Ascending aorta (tissue), 2 donors: ENCODE measurements at regions of chr3 and their contacts with region 1.

Region 1: GRCh38 chr3:74630602-74631001 is 16.1 kb upstream of the CNTN3 start:
- DNase-seq: no peak
- H3K4me3 ChIP-seq: no peak overlapping the region
- H3K27ac ChIP-seq: no peak overlapping the region
- H3K4me1 ChIP-seq: no peaks in the 10 kb centered on the region
- H3K27me3 ChIP-seq: no peaks in the 10 kb centered on the region
- CTCF ChIP-seq: peak; percentile 36 to 69 (median 40)

Region 2: DNA sequence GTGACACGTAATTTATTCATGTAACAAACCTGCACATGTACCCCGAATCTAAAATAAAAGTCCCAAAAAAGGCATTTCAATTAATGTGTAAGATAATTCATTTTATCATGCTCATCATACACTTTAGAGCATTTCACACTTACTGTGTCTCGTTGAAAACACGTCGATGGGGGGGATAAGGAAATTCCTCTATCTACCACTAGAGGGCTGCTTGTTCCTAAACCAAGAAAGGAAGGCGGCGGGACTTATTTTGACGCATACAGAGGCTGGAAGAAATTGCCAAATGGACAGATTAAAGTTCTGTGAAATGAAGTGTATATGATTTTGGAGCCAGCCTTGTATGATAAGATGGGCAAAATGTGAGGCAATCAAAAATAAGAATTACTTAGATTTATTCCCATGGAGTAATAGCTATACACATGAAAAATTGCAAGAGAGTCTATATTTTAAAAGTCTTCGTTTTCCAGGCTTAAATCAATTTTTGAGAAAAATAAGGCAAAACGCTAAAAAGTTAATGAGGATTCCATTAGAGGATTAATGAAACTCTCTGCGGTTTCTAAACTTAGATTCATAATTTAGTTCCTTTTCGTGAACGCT is 362.9 kb before region 1 on chr3:
- intact Hi-C with region 1: loop called (anchors 2 kb)
- DNase-seq: peak in 1 of 2 donors; percentile 64
- H3K4me3 ChIP-seq: no peak overlapping the region
- H3K27ac ChIP-seq: no peak overlapping the region
- H3K4me1 ChIP-seq: peaks cover 0 to 5% of the 10 kb centered on the region in 2 donors
- H3K27me3 ChIP-seq: no peaks in the 10 kb centered on the region
- CTCF ChIP-seq: peak; percentile 34 to 82 (median 73)

Region 3: DNA sequence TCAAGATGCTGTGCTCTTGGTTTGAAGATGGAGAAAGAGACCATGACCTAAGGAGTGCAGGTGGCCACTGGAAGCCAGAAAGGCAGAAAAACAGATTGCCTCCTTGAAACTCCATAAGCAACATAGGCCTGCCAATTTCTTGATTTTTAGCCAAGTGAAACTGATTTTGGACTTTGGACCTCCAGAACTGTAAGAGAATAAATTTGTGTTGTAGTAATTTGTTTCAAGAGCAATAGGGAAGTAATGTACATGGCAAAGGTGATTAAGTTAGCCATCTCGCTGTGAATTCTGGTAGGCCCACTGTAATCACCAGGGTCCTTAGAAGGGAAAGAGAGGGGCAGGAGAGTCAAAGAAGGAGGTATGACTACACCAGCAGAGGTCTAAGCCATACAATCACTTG is 254.9 kb before region 1 on chr3:
- intact Hi-C with region 1: loop called (anchors 1 kb)
- DNase-seq: no peak
- H3K4me3 ChIP-seq: no peak overlapping the region
- H3K27ac ChIP-seq: no peak overlapping the region
- H3K4me1 ChIP-seq: no peaks in the 10 kb centered on the region
- H3K27me3 ChIP-seq: no peaks in the 10 kb centered on the region
- CTCF ChIP-seq: no peak

Region 4: GRCh38 chr3:74722211-74722610 is 91.6 kb after region 1 on chr3:
- intact Hi-C with region 1: no loop called
- DNase-seq: no peak
- H3K4me3 ChIP-seq: no peak overlapping the region
- H3K27ac ChIP-seq: no peak overlapping the region
- H3K4me1 ChIP-seq: no peaks in the 10 kb centered on the region
- H3K27me3 ChIP-seq: no peaks in the 10 kb centered on the region
- CTCF ChIP-seq: no peak

Region 5: GRCh38 chr3:75059120-75059519 is 428.5 kb after region 1 on chr3:
- intact Hi-C with region 1: no loop called
- DNase-seq: no peak
- H3K4me3 ChIP-seq: no peak overlapping the region
- H3K27ac ChIP-seq: no peak overlapping the region
- H3K4me1 ChIP-seq: no peaks in the 10 kb centered on the region
- H3K27me3 ChIP-seq: no peaks in the 10 kb centered on the region
- CTCF ChIP-seq: no peak